ENCODE measurements at regions of chr4 and their contacts with region 1.

Region 1: GRCh38 chr4:184733654-184734524 is at the start of gene CENPU:
- DNase-seq: peak; percentile 77
- H3K4me3 ChIP-seq: peak within 1 kb of the TSS; percentile 85
- H3K27me3 ChIP-seq: no peaks in the 10 kb centered on the region
- CTCF ChIP-seq: no peak
- polyA plus RNA-seq, gene CENPU: 3.0 and 7.3 TPM in 2 replicates

Region 2: GRCh38 chr4:184712322-184712721 is 21.6 kb before region 1 on chr4:
- CTCF ChIA-PET with region 1: no interaction called
- POLR2A ChIA-PET with region 1: interaction called, 16 read pairs
- DNase-seq: no peak
- H3K4me3 ChIP-seq: no peak overlapping the region
- H3K27me3 ChIP-seq: no peaks in the 10 kb centered on the region
- CTCF ChIP-seq: no peak